Body of pancreas (tissue), 4 donors: ENCODE measurements at regions of chr3 and their contacts with region 1.

Region 1: DNA sequence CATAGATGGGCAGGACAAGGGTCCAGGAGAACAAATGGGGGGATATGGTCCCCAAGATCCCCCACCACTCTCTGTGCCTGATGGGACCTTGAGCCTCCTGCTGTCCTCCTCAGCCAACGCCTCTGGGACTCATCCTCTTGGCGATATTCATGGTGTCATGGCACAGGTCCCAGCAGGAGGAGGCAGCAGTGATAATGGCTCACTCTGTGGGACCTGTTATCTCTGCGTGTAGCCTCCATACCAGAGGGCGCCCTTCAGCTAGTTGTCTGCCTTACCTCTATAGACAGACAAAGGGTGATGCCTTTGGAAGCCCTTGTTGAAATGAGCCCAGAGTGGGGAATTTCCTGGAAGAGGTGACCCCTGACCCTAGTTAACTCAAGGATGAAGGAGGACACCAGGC is 7.4 kb downstream of the ZBTB47 start:
- DNase-seq: no peak
- ATAC-seq: no peak
- H3K4me3 ChIP-seq: no peak overlapping the region
- H3K27ac ChIP-seq: no peak overlapping the region
- H3K4me1 ChIP-seq: peaks cover 5% of the 10 kb centered on the region
- H3K27me3 ChIP-seq: no peaks in the 10 kb centered on the region
- CTCF ChIP-seq: no peak
- POLR2A ChIP-seq: no peak

Region 2: DNA sequence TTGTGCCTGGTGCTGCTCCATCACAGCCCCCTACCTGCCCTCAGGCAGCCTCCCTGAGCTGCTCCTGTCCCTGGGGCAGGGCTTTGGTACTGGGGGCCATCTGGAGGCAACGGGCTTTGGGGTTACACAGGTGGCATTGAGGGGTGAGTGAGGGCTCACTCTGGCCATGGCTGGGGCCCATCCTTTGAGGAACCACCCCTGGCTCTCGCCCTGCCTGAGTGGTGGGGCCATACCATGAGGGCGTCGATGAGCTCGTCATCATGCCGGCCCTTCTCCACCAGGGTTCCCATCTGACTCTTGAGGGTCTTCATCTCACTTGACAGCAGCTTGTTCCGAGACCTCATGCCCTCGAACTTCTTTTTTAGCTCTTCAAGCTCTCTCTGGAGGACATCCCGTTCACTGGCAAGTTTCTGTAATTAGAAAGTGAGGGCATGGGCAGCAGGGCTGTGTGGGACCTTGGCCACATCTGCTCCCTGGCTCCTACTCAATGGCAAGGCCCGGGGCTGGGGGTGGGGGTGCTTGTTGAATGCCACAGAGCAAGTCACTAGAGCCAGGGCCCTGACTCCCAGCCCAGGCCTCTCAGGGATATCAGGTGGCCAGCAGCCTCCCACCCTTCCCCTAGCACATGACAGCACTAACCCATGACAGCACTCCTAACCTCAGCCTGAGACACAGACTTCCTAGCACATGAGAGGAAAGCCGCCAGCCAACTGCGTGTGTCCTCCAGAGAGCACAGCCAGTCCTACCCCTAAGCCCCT is 78.7 kb after region 1 on chr3:
- intact Hi-C with region 1: loop called (anchors 5 kb)
- DNase-seq: no peak
- ATAC-seq: no peak
- H3K4me3 ChIP-seq: no peak overlapping the region
- H3K27ac ChIP-seq: no peak overlapping the region
- H3K4me1 ChIP-seq: no peaks in the 10 kb centered on the region
- H3K27me3 ChIP-seq: no peaks in the 10 kb centered on the region
- CTCF ChIP-seq: no peak
- POLR2A ChIP-seq: no peak

Region 3: DNA sequence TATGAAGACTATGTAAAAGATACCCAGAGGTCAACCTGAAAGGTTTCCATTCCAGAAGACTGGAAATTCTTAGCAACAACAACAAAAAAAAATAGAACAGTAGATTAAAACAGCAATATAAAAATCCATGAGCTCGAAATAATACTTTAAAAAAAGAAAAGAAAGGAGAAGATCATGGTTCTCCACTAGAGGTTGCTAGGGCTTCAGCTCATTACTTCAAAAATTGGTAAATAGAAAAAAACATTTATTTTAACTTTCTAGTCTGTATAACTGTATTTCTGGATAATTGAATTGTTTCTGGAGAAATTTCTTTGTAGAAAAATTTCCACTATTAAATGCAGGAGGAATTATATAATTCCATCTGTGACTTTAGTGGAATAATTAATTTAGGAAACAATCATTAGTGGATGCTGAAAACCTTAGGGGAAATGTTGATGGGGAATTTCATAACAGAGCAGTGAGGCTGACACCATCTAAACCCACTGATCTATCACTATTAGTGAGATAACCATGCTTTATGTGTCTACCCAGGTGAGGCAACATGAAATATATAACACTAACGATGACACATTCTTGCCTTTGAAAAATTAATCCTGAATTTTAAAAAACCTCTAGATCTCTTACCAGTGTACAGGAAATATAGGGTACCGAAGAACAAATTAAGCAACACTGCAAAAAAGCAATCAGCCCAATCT is 562.9 kb after region 1 on chr3:
- intact Hi-C with region 1: no loop called
- DNase-seq: no peak
- ATAC-seq: no peak
- H3K4me3 ChIP-seq: no peak overlapping the region
- H3K27ac ChIP-seq: no peak overlapping the region
- H3K4me1 ChIP-seq: peaks cover 4% of the 10 kb centered on the region
- H3K27me3 ChIP-seq: no peaks in the 10 kb centered on the region
- CTCF ChIP-seq: peak in 6 of 7 experiments; percentile 35 to 59 (median 52)
- POLR2A ChIP-seq: no peak